Endothelial cell of umbilical vein (primary cell): ENCODE measurements at regions of chr10 and their contacts with region 1.

Region 1: DNA sequence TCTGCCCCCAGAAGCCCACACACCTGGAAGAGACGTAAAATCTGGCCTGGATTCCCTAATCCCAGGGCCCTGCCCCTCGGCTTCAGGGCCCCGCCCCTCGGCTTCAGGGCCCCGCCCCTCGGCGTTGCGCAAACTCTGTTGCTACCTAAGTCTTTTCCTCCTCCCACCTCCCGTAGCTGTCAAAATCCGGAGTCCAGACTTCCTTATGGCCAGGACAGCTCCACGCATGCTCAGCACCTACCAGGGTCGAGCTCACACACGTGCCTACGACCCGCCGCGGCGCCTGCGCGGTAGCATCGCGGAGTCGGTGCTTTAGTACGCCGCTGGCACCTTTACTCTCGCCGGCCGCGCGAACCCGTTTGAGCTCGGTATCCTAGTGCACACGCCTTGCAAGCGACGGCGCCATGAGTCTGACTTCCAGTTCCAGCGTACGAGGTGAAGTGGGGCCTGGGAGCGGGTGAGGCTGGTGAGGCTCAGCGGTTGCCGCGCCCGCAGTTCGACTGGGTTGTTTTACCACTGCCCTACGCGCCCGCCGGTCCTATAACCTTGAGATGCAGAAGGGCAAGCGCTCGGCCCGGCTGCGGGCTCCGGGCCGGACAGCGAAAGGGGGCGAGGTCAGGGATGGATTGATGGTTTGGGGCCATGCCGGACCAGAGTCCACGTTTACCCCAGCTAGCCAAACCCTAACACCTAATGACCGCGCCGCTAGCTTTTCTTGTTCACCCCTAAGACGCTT is at the start of gene CISD1:
- DNase-seq: peak; percentile 99
- H3K4me3 ChIP-seq: peak within 1 kb of the TSS; percentile 62 to 82 (median 77)
- H3K27ac ChIP-seq: peak within 1 kb of the TSS; percentile 92
- H3K4me1 ChIP-seq: peaks cover 45% of the 10 kb centered on the region
- H3K27me3 ChIP-seq: no peaks in the 10 kb centered on the region
- CTCF ChIP-seq: no peak
- POLR2A ChIP-seq: peak; percentile 23
- total RNA-seq, gene CISD1: 53.0 and 57.3 TPM in 2 replicates

Region 2: GRCh38 chr10:58237014-58237830 is 31.8 kb before region 1 on chr10:
- CTCF ChIA-PET with region 1: interaction called, 10 read pairs
- POLR2A ChIA-PET with region 1: interaction called, 3 read pairs
- dilution Hi-C with region 1: no loop called
- intact Hi-C with region 1: loop called (anchors 1 kb)
- DNase-seq: peak; percentile 93
- H3K4me3 ChIP-seq: peak overlapping the region in 1 of 3 experiments; percentile 70
- H3K27ac ChIP-seq: peak overlapping the region; percentile 94
- H3K4me1 ChIP-seq: peaks cover 50% of the 10 kb centered on the region
- H3K27me3 ChIP-seq: no peaks in the 10 kb centered on the region
- CTCF ChIP-seq: no peak
- POLR2A ChIP-seq: no peak

Region 3: GRCh38 chr10:58282615-58283014 is 13.6 kb after region 1 on chr10:
- CTCF ChIA-PET with region 1: interaction called, 4 read pairs
- POLR2A ChIA-PET with region 1: interaction called, 3 read pairs
- dilution Hi-C with region 1: no loop called
- intact Hi-C with region 1: loop called (anchors 1 kb)
- DNase-seq: peak; percentile 93
- H3K4me3 ChIP-seq: peak overlapping the region in 1 of 3 experiments; percentile 35
- H3K27ac ChIP-seq: peak overlapping the region; percentile 87
- H3K4me1 ChIP-seq: peaks cover 41% of the 10 kb centered on the region
- H3K27me3 ChIP-seq: no peaks in the 10 kb centered on the region
- CTCF ChIP-seq: no peak
- POLR2A ChIP-seq: no peak

Region 4: DNA sequence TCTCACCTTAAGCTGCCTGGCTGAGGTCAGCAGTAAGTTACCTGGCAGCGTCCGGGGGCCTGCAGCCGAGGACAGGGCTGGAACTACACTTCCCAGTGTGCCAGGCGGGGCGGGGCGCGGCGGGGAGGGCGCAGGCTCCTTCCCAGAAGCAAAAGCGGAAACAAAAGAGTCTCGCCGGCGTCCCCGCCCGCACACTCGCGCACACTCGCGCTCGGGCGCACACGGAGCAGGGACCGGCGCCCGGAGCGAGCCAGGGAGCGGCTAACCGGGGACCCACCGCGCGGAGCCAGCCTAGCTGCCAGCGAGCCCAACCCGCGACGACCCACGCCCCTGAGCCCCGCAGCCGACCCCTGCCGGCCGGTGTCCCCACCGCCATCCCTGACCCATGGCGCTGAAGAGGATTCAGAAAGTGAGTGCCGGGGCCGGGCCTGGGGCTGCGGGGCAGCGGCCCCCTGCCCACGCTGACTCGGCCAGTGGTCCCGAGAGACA is 65.8 kb after region 1 on chr10 and contains the start of gene UBE2D1:
- CTCF ChIA-PET with region 1: no interaction called
- POLR2A ChIA-PET with region 1: interaction called, 6 read pairs
- dilution Hi-C with region 1: no loop called
- intact Hi-C with region 1: loop called (anchors 1 kb)
- DNase-seq: peak; percentile 69
- H3K4me3 ChIP-seq: peak within 1 kb of the TSS; percentile 65 to 82 (median 73)
- H3K27ac ChIP-seq: peak within 1 kb of the TSS; percentile 48
- H3K4me1 ChIP-seq: peaks cover 5% of the 10 kb centered on the region
- H3K27me3 ChIP-seq: peaks cover 16 to 23% of the 10 kb centered on the region in 2 experiments
- CTCF ChIP-seq: no peak
- POLR2A ChIP-seq: peak; percentile 92
- total RNA-seq, gene UBE2D1: 14.5 and 16.9 TPM in 2 replicates

Region 5: GRCh38 chr10:59299933-59300332 is 1030.9 kb after region 1 on chr10:
- CTCF ChIA-PET with region 1: no interaction called
- POLR2A ChIA-PET with region 1: no interaction called
- dilution Hi-C with region 1: no loop called
- intact Hi-C with region 1: no loop called
- DNase-seq: no peak
- H3K4me3 ChIP-seq: no peak overlapping the region
- H3K27ac ChIP-seq: no peak overlapping the region
- H3K4me1 ChIP-seq: no peaks in the 10 kb centered on the region
- H3K27me3 ChIP-seq: no peaks in the 10 kb centered on the region
- CTCF ChIP-seq: no peak
- POLR2A ChIP-seq: no peak